ENCODE measurements at regions of chr7 and their contacts with region 1.

Region 1: GRCh38 chr7:140810830-140811556 is 113.7 kb downstream of the BRAF start:
- DNase-seq: peak; percentile 53
- ATAC-seq: peak; percentile 97
- H3K4me3 ChIP-seq: no peak overlapping the region
- H3K27ac ChIP-seq: no peak overlapping the region
- H3K4me1 ChIP-seq: no peaks in the 10 kb centered on the region
- H3K27me3 ChIP-seq: no peaks in the 10 kb centered on the region
- CTCF ChIP-seq: peak; percentile 54 to 86 (median 65); a peak in 5 of 6 replicates
- POLR2A ChIP-seq: no peak
- RAD21 ChIP-seq: peak; percentile 79

Region 2: GRCh38 chr7:140924019-140924820 is 113.2 kb after region 1 on chr7:
- CTCF ChIA-PET with region 1: no interaction called
- POLR2A ChIA-PET with region 1: no interaction called
- RAD21 ChIA-PET with region 1: no interaction called
- intact Hi-C with region 1: loop called (anchors 2 kb)
- DNase-seq: peak; percentile 32
- ATAC-seq: peak; percentile 85
- H3K4me3 ChIP-seq: peak overlapping the region; percentile 88
- H3K27ac ChIP-seq: peak overlapping the region; percentile 89
- H3K4me1 ChIP-seq: peaks cover 0 to 14% of the 10 kb centered on the region in 2 experiments; a peak in 3 of 4 replicates
- H3K27me3 ChIP-seq: no peaks in the 10 kb centered on the region
- CTCF ChIP-seq: peak in 2 of 3 experiments; percentile 50 to 57; a peak in 5 of 6 replicates
- POLR2A ChIP-seq: no peak
- RAD21 ChIP-seq: no peak

Region 3: DNA sequence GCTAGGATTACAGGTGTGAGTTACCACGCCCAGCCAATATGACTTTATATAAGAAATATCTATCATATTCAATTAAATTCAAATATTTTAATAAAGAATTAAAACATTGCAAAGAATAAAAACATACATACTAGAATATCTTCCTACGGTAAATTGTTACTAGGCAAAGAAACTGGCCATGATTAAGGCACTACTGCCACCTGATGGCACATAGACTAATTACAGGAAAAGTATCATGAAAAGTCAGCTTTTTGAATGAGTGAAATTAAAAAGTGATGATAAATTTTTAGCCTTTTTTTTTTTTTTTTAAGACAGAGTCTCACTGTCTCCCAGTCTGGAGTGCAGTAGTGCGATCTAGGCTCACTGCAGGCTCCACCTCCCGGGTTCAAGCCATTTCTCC is 172.8 kb after region 1 on chr7:
- CTCF ChIA-PET with region 1: interaction called, 11 read pairs
- POLR2A ChIA-PET with region 1: no interaction called
- RAD21 ChIA-PET with region 1: interaction called in 1 of 2 experiments, 3 read pairs
- intact Hi-C with region 1: no loop called
- DNase-seq: peak; percentile 8
- ATAC-seq: no peak
- H3K4me3 ChIP-seq: no peak overlapping the region
- H3K27ac ChIP-seq: no peak overlapping the region
- H3K4me1 ChIP-seq: no peaks in the 10 kb centered on the region
- H3K27me3 ChIP-seq: no peaks in the 10 kb centered on the region
- CTCF ChIP-seq: peak; percentile 27 to 56 (median 42); a peak in 4 of 6 replicates
- POLR2A ChIP-seq: no peak
- RAD21 ChIP-seq: peak; percentile 65

Region 4: DNA sequence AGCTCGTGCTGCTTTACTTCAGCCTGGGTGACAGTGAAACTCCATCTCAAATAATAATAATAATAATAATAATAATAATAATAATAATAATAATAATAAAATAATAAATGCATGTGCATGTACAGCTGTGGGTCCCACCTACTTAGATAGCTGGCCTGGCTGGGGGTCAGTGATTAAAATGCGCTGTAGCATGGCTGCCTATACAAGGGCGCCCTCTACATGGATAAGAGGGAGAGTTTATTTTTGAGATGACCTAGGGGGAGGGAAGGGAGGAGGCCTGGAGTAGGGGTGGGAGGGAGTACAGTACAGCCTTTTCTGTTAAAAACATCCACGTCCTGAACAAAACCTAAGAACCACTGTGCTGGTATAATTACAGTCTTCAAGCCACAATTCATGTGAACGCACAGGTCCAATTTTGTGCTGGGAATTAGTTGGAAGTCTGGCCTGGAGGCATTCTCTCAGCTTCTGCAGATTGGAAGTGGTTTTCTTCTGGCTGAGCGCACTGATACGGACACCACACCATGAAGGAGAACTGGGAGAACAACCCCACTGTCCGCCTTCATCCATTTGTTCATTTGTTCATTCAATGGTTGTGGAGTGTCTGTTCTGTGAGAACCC is 409.4 kb after region 1 on chr7:
- CTCF ChIA-PET with region 1: interaction called, 4 read pairs
- POLR2A ChIA-PET with region 1: no interaction called
- RAD21 ChIA-PET with region 1: no interaction called
- intact Hi-C with region 1: loop called (anchors 5 kb)
- DNase-seq: peak; percentile 7
- ATAC-seq: peak; percentile 92
- H3K4me3 ChIP-seq: no peak overlapping the region
- H3K27ac ChIP-seq: no peak overlapping the region
- H3K4me1 ChIP-seq: no peaks in the 10 kb centered on the region
- H3K27me3 ChIP-seq: peaks cover 6% of the 10 kb centered on the region; the same call in 1 of the 2 replicates
- CTCF ChIP-seq: peak; percentile 47 to 55 (median 54); a peak in 5 of 6 replicates
- POLR2A ChIP-seq: no peak
- RAD21 ChIP-seq: peak; percentile 80

Region 5: DNA sequence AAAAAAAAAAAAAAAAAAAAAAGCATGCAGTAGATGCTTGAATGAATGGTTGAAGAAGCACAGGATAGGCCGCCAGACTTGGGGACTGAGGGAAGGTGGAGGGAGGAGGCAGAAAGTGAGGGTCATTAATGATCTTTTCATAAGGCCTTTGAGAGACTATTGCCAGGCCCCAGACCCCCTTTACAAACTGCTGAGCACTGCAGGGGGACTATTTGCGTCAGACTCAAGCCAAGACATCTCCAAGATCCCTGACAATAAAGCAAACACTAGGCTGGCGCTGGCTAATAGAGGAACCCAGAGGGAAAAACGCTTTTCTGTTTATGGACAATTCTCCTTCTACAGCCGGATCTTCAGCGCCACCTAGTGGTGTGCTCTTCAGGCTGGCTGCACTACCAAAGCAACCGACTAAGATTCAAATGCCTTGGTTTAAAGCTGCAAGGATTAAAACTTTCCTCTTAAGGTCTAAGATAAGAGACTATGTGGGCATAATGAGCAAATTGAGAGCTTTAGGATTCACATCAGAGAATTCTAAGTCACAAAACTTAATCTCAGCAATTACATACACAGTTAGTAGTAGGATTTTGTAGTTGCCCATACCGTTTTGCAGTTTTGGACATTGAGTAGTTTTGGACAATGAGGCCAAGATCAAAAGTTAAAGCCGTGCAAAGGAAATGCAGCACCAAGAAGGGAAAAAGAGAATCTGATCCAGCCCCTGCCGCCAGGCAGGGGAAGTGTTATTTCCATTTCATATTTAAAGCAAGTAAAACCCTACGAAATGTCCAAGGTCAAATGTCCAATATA is 722.4 kb after region 1 on chr7:
- CTCF ChIA-PET with region 1: interaction called, 4 read pairs
- POLR2A ChIA-PET with region 1: no interaction called
- RAD21 ChIA-PET with region 1: no interaction called
- intact Hi-C with region 1: loop called (anchors 5 kb)
- DNase-seq: peak; percentile 48
- ATAC-seq: peak; percentile 89
- H3K4me3 ChIP-seq: no peak overlapping the region
- H3K27ac ChIP-seq: no peak overlapping the region
- H3K4me1 ChIP-seq: no peaks in the 10 kb centered on the region
- H3K27me3 ChIP-seq: peaks cover 13% of the 10 kb centered on the region; the same call in 1 of the 2 replicates
- CTCF ChIP-seq: peak; percentile 73 to 98 (median 96)
- POLR2A ChIP-seq: no peak
- RAD21 ChIP-seq: peak; percentile 89